Activated T-helper 2 cell treated with anti-CD3 and anti-CD28 coated beads, Interferon-gamma antibody, Interleukin-2, Interleukin-4, amounts not matched to agents 10 μg/mL and 5 μg/mL and 100 μg/mL, durations not matched to agents 14 hours and 24 hours and 36 hours (primary cell): ENCODE measurements at regions of chr1 and their contacts with region 1.

Region 1: DNA sequence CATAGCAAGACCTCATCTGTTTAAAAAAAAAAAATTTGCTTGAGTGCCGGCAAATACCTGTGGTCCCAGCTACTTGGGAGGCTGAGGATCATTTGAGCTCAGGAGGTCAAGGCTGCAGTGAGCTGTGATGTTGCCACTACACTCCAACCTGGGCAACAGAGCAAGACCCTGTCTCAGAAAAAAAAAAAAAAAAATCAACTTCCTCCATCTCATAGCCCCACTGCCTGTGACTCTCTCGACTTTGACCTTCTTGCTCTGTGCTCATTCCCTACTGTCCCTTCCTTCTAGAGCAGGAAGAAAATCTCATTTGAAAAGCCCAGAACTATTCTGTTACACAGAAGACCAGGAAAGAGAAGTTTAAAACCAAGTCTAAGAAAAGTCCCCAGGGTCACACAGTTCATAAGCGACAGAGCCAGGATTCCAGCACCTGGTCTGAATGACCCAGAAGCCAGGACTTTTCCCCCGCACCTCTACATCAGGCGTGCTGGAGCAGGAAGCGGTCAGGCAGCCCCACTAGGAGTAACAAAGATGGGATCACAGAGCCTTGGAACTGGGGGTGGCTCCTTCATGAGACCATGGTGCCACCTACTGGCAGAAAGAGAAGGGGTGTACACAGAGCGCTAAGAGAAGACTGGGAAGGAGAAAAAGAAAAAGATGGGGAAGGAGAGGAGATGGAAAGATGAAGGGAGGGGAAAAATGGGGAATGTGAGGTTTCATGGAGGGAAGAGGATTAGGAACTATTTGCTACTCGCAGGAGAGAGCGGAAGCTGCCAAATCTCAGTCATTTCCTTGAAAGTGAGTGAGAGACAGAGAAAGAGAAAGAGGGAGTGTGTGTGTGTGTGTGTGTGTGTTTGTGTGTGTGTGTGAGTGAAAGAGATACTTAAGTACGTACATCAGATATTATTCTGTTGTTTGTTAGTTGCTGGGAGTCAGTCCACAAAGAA is 3.1 kb upstream of the P3R3URF start:
- DNase-seq: peak; percentile 39
- H3K4me3 Mint-ChIP-seq: no peak overlapping the region
- H3K27ac Mint-ChIP-seq: no peak overlapping the region
- H3K4me1 Mint-ChIP-seq: peaks cover under 1% of the 10 kb centered on the region
- H3K27me3 Mint-ChIP-seq: peaks cover 7% of the 10 kb centered on the region

Region 2: DNA sequence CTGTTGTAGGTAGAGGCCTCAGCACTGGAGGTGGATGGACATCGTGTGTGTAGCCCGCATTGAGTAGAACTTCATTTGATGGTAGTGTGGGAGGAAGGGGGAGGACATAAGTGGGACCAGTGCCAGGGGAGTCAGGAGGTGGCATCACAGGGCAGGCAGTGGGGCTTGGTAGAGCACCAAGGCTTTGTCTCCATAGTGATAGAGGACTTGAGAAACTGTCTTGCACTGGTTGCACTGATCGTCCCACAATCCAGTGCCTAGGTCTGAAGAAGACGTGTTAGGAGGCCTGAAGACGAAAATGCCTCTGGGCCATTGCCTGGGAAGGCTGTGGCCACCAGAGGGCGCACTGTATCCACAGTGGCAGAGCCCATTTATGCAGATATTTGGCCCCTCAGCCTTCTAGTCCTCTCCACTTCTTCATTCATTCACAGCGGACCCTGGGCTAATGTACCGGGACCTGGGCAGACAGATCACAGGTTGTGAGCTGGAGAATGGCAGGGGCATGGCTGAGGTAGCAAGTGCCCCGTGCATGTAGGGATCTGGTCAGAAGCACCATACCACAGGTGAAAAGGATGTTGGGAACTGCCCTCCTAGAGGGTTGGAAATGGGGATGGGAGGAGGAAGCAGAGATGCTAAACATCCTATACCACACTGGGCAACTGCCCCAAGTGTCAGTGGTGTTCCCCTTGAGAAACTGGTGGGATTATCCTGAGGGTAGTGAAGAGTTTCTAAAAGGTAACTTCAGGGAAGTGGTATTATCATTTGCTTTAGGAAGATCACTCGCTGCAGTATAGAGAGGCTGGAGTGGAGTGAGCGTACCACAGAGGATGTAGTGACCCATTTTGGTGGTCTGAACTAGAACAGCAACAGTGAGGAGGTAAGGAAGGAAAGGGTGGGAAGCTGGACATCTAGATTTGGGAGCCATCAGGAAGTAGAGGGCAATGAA is 142.2 kb before region 1 on chr1:
- intact Hi-C with region 1: loop called (anchors 1 kb)
- DNase-seq: peak; percentile 71
- H3K4me3 Mint-ChIP-seq: no peak overlapping the region
- H3K27ac Mint-ChIP-seq: no peak overlapping the region
- H3K4me1 Mint-ChIP-seq: no peaks in the 10 kb centered on the region
- H3K27me3 Mint-ChIP-seq: no peaks in the 10 kb centered on the region

Region 3: GRCh38 chr1:46197964-46198811 is 18.8 kb after region 1 on chr1 and contains the start of gene POMGNT1:
- intact Hi-C with region 1: loop called (anchors 2 kb)
- DNase-seq: peak; percentile 74
- H3K4me3 Mint-ChIP-seq: peak within 1 kb of the TSS; percentile 85
- H3K27ac Mint-ChIP-seq: peak within 1 kb of the TSS; percentile 80
- H3K4me1 Mint-ChIP-seq: peaks cover 19% of the 10 kb centered on the region
- H3K27me3 Mint-ChIP-seq: no peaks in the 10 kb centered on the region
- total RNA-seq, gene POMGNT1: 67.0 and 67.8 TPM in 2 replicates

Region 4: DNA sequence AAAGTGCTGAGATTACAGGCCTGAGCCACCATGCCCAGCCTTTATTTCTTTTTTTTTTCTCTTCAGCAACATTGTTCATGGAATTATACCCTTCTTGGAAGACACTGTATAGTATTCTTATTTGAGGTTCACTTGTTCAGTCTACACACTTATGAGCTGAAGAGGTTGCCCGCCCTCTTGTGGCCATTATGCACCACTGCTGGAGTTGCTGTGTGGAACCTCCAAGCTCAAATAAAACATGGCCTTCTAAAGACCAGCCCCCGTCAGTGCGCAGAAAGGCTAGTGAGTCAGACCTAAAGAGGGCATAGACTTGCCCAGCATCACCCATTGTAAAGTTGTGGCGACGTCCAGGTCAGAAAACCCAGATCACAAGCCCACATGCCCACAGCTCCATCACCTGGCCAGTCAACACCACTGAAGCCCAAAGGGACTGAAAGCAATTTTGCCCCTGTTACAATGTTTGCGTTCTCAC is 44.1 kb after region 1 on chr1:
- intact Hi-C with region 1: loop called (anchors 2 kb)
- DNase-seq: peak; percentile 49
- H3K4me3 Mint-ChIP-seq: no peak overlapping the region
- H3K27ac Mint-ChIP-seq: no peak overlapping the region
- H3K4me1 Mint-ChIP-seq: no peaks in the 10 kb centered on the region
- H3K27me3 Mint-ChIP-seq: peaks cover 4% of the 10 kb centered on the region